ENCODE measurements at regions of chr7 and their contacts with region 1.

Region 1: GRCh38 chr7:143408686-143409561 is at the start of gene EPHA1:
- DNase-seq: peak; percentile 28 to 64 (median 45)
- H3K4me3 ChIP-seq: peak within 1 kb of the TSS; percentile 81
- H3K4me3 Mint-ChIP-seq: peak within 1 kb of the TSS; percentile 78 to 97 (median 89)
- H3K27ac ChIP-seq: no peak within 1 kb of the TSS
- H3K27ac Mint-ChIP-seq: peak within 1 kb of the TSS; percentile 63 to 99 (median 94)
- H3K4me1 ChIP-seq: peaks cover 57% of the 10 kb centered on the region
- H3K4me1 Mint-ChIP-seq: peaks cover 41 to 60% (median 53%) of the 10 kb centered on the region in 3 donors
- H3K27me3 ChIP-seq: no peaks in the 10 kb centered on the region
- H3K27me3 Mint-ChIP-seq: peaks cover 8 to 21% of the 10 kb centered on the region in 2 donors
- total RNA-seq, gene EPHA1: 2.8 to 3.1 TPM

Region 2: DNA sequence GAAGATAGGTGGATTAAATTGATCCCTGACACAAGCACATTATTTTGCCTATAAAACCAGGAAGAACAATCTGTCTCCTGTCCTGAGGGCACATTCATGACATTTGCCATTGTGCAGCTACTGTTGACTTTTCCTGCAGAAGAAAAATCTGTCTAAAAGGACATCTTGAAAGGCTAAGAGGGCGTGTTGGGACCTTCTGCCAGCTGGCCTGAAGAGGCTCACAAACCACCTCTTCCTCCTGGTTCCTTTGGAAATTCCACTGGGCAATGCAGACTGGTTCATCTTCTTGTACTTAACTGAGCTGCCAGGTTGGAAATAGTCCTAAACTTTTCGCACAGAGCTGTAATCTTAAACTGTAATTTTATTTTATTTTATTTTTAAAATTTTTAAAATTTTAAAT is 312.8 kb before region 1 on chr7:
- CTCF ChIA-PET with region 1: no interaction called
- POLR2A ChIA-PET with region 1: no interaction called
- DNase-seq: no peak
- H3K4me3 ChIP-seq: no peak overlapping the region
- H3K4me3 Mint-ChIP-seq: no peak overlapping the region
- H3K27ac ChIP-seq: no peak overlapping the region
- H3K27ac Mint-ChIP-seq: no peak overlapping the region
- H3K4me1 ChIP-seq: no peaks in the 10 kb centered on the region
- H3K4me1 Mint-ChIP-seq: no peaks in the 10 kb centered on the region
- H3K27me3 ChIP-seq: no peaks in the 10 kb centered on the region
- H3K27me3 Mint-ChIP-seq: no peaks in the 10 kb centered on the region

Region 3: GRCh38 chr7:143372070-143372469 is 36.9 kb before region 1 on chr7:
- CTCF ChIA-PET with region 1: interaction called, 11 read pairs
- POLR2A ChIA-PET with region 1: interaction called, 7 read pairs
- DNase-seq: peak in 4 of 5 donors; percentile 19 to 76 (median 50)
- H3K4me3 ChIP-seq: no peak overlapping the region
- H3K4me3 Mint-ChIP-seq: peak overlapping the region in 6 of 7 donors; percentile 5 to 76 (median 41)
- H3K27ac ChIP-seq: no peak overlapping the region
- H3K27ac Mint-ChIP-seq: peak overlapping the region; percentile 15 to 93 (median 87)
- H3K4me1 ChIP-seq: peaks cover 39% of the 10 kb centered on the region
- H3K4me1 Mint-ChIP-seq: peaks cover 56 to 60% (median 58%) of the 10 kb centered on the region in 3 donors
- H3K27me3 ChIP-seq: no peaks in the 10 kb centered on the region
- H3K27me3 Mint-ChIP-seq: no peaks in the 10 kb centered on the region

Region 4: DNA sequence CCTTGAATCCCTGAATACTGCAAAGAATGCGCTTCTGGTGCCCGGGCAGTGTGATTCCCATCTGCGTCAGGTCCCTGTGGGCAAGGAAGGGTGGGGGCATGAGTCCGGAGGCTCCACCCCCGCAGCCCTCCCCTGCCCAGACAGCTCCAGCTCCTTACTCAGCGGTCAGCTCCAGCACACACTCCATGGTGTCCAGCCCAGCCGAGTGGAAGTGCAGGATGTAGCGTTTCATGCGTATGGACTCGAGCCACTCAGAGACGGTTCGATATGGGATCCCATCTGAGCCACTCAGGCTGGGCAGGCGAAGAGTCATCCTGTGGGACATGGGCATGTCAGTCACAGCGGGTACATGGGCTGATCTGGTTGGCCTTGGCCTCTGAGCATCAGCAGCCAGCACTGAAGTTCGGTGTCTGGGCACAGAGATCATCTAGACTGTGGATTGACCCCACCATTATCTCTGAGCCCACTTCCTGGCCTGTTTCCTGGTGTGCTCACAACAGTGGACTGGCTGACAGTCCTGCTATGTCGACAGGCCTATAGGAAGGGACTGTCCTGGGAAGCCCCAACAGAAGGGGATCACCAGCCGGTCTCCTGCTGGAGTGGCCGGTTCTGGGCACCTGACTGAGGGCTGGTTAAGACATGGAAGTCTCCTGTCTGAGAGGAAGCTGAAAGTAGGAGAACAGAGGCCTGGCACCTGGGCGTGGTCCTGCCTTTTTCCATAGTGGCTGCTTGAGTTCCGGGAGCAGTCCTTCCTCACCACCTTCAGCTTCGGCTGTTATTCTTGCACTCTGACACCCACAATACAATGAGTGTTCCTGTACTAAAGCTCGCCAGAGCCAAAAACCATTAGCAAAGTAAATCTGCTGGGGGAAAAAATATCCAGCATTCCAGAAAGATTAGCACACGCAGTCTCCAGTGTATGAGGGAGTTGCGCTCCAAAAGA is 17.2 kb before region 1 on chr7:
- CTCF ChIA-PET with region 1: interaction called, 13 read pairs
- POLR2A ChIA-PET with region 1: interaction called, 21 read pairs
- DNase-seq: no peak
- H3K4me3 ChIP-seq: no peak overlapping the region
- H3K4me3 Mint-ChIP-seq: no peak overlapping the region
- H3K27ac ChIP-seq: no peak overlapping the region
- H3K27ac Mint-ChIP-seq: peak overlapping the region in 4 of 8 donors; percentile 15 to 84 (median 23)
- H3K4me1 ChIP-seq: peaks cover 5% of the 10 kb centered on the region
- H3K4me1 Mint-ChIP-seq: peaks cover 17 to 36% (median 22%) of the 10 kb centered on the region in 3 donors
- H3K27me3 ChIP-seq: no peaks in the 10 kb centered on the region
- H3K27me3 Mint-ChIP-seq: no peaks in the 10 kb centered on the region